ENCODE measurements at regions of chr10 and their contacts with region 1.

Region 1: DNA sequence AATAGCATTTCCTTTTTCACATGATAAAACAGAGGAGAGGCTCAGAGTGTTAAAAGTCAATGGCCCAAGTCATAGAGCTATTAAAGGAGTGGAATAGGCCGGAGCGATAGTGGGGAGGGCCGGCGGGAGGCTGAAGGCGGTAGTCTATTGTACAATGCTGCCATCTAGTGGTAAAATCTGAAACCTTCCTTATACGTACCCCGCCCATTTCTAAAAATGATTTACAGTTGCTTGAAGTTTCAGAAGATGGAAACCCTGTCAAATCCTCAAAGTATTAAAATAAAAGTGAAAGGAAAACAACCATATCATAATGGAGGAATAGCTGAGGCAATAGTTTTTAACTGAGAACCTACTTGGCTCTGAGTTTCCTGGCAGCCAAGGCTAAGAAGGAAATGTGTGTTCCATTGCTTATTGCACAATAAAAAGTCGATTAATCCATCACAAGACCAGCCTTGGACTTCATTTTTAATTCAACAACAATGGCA is 209.1 kb downstream of the CCSER2 start:
- DNase-seq: peak; percentile 53
- ATAC-seq: peak; percentile 70
- H3K4me3 Mint-ChIP-seq: no peak overlapping the region
- H3K27ac Mint-ChIP-seq: no peak overlapping the region
- H3K4me1 Mint-ChIP-seq: peaks cover 8% of the 10 kb centered on the region
- H3K27me3 Mint-ChIP-seq: peaks cover 17% of the 10 kb centered on the region

Region 2: DNA sequence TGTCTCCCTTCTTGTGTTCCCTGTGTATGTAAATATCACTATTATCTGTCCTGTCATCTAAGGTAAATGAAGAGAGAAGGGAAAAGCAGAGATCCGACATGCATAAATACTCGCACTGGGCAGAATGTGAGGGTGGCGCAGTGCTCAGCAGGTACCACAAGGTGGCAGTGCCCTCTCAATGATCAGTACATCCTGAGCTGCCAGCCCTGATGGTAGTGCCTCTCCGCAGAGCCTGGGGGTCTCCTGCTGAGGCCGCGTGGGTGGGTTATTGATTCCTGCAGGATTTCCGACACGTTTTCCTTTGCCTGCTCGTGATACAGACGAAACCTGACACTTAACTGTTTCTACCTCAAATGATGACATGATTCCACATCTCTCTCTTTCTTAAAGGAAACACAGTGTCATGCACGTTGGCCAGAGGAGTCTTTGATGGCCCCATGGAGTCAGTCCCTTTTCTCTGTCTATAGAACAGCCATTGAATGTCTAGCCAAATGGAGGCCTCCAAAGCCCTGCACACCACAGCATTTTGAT is 272.8 kb before region 1 on chr10:
- CTCF ChIA-PET with region 1: interaction called, 260 read pairs
- POLR2A ChIA-PET with region 1: interaction called, 3 read pairs
- DNase-seq: peak; percentile 82
- ATAC-seq: peak; percentile 97
- H3K4me3 Mint-ChIP-seq: no peak overlapping the region
- H3K27ac Mint-ChIP-seq: no peak overlapping the region
- H3K4me1 Mint-ChIP-seq: peaks cover 18% of the 10 kb centered on the region
- H3K27me3 Mint-ChIP-seq: peaks cover 18% of the 10 kb centered on the region

Region 3: DNA sequence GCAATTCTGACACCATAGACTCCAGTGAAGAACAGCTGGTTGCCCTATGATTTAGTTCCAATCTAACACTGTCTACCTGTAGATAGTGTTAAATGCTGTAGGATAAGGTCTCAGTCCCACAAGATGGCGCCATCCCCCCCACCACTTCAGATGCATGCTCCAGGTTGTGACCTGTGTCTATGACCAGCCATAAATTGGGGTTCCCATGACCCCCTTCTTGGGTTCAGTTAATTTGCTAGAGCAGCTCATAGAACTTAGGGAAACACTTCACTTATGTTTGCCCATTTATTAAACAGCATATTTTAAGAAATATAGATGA is 196.0 kb before region 1 on chr10:
- CTCF ChIA-PET with region 1: interaction called, 21 read pairs
- POLR2A ChIA-PET with region 1: no interaction called
- DNase-seq: no peak
- ATAC-seq: peak; percentile 20
- H3K4me3 Mint-ChIP-seq: no peak overlapping the region
- H3K27ac Mint-ChIP-seq: peak overlapping the region; percentile 9
- H3K4me1 Mint-ChIP-seq: peaks cover 58% of the 10 kb centered on the region
- H3K27me3 Mint-ChIP-seq: no peaks in the 10 kb centered on the region

Region 4: GRCh38 chr10:84360637-84361365 is 176.7 kb before region 1 on chr10:
- CTCF ChIA-PET with region 1: interaction called, 72 read pairs
- POLR2A ChIA-PET with region 1: no interaction called
- DNase-seq: no peak
- ATAC-seq: no peak
- H3K4me3 Mint-ChIP-seq: peak overlapping the region; percentile 13
- H3K27ac Mint-ChIP-seq: no peak overlapping the region
- H3K4me1 Mint-ChIP-seq: peaks cover 59% of the 10 kb centered on the region
- H3K27me3 Mint-ChIP-seq: no peaks in the 10 kb centered on the region

Region 5: DNA sequence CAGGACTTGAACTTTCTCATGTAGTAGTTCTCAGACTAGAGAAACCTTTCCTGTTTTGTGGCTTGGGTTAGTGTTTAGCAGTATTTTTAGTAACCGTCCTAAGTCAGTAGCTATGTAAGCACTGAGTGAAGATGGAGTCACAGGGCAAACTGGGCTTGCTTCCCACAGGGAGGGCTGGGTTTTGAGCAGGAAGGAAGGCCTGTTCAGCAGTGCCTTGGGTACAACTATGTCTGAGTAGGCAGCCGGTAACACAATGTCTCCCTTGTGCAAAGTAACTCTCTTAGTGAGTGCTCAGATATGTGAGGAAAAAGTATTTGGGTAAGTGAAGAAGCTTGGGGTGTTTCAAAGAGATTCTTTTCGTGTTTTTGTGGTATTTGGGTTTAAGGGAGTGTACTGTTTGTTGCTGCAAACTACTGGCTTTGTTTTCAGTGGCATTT is 112.7 kb before region 1 on chr10:
- CTCF ChIA-PET with region 1: interaction called, 50 read pairs
- POLR2A ChIA-PET with region 1: no interaction called
- DNase-seq: peak; percentile 48
- ATAC-seq: peak; percentile 84
- H3K4me3 Mint-ChIP-seq: peak overlapping the region; percentile 19
- H3K27ac Mint-ChIP-seq: peak overlapping the region; percentile 73
- H3K4me1 Mint-ChIP-seq: peaks cover 17% of the 10 kb centered on the region
- H3K27me3 Mint-ChIP-seq: no peaks in the 10 kb centered on the region

Region 6: DNA sequence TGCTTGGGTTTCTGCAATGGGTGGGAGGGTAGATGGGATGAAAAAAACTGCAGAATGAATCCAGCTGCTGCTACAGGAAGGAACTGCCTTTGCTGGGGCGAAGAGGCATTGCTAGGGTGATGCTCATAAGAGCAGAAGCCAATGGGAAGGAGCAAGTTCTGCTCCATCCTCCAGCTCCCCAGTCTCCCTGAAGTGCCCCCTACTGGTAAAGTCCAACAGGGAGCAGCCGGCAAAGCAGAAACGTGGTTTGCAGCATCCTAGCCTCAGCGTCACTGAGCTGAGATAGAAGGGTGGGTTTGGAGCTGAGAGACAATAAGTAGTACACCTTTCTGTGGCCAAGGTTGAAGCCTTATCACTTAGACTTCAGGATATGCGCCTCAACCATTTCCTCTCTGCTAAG is 11.4 kb after region 1 on chr10:
- CTCF ChIA-PET with region 1: interaction called, 47 read pairs
- POLR2A ChIA-PET with region 1: no interaction called
- DNase-seq: no peak
- ATAC-seq: no peak
- H3K4me3 Mint-ChIP-seq: no peak overlapping the region
- H3K27ac Mint-ChIP-seq: no peak overlapping the region
- H3K4me1 Mint-ChIP-seq: no peaks in the 10 kb centered on the region
- H3K27me3 Mint-ChIP-seq: peaks cover 10% of the 10 kb centered on the region

Measured in activated CD8-positive, alpha-beta T cell treated with anti-CD3 and anti-CD28 coated beads, Interleukin-2, amount 10 ng/mL, durations not matched to agents 7 days and 5 days (primary cell).